Activated CD4-positive, alpha-beta memory T cell treated with anti-CD3 and anti-CD28 coated beads, Interleukin-2, amount 10 ng/mL, durations not matched to agents 7 days and 5 days (primary cell): ENCODE measurements at regions of chr22 and their contacts with region 1.

Region 1: GRCh38 chr22:40898850-40899357 is 37.0 kb upstream of the DNAJB7 start:
- DNase-seq: no peak
- H3K4me3 Mint-ChIP-seq: no peak overlapping the region
- H3K27ac Mint-ChIP-seq: peak overlapping the region; percentile 52
- H3K4me1 Mint-ChIP-seq: peaks cover 21% of the 10 kb centered on the region
- H3K27me3 Mint-ChIP-seq: no peaks in the 10 kb centered on the region

Region 2: DNA sequence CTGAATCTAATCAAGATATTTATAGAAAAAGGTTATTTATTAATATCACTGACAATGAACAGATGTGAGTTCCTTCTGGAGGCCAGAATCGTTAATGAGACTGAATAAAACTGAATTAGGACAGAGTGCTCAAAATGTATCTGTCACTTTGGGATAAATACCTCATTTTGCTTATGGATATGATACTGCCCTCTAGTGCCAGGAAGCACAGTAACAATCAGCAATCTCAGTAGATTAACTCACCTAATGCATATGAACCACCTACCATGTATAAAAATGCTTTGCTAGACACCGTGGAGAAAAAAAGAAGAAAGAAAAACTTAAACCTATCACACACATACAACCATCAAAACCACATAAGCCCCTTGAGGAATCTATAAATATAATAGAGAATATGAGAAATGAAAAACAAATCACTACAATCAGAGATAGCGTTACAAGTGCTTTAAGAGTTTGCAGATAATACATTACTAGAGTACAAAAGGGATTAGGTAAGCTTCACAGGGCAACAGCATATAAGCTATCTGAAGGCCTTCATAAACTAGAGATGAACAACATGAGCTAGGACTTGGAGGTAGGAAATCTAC is 411.1 kb before region 1 on chr22:
- CTCF ChIA-PET with region 1: interaction called, 13 read pairs
- POLR2A ChIA-PET with region 1: no interaction called
- DNase-seq: no peak
- H3K4me3 Mint-ChIP-seq: no peak overlapping the region
- H3K27ac Mint-ChIP-seq: no peak overlapping the region
- H3K4me1 Mint-ChIP-seq: peaks cover 21% of the 10 kb centered on the region
- H3K27me3 Mint-ChIP-seq: no peaks in the 10 kb centered on the region

Region 3: DNA sequence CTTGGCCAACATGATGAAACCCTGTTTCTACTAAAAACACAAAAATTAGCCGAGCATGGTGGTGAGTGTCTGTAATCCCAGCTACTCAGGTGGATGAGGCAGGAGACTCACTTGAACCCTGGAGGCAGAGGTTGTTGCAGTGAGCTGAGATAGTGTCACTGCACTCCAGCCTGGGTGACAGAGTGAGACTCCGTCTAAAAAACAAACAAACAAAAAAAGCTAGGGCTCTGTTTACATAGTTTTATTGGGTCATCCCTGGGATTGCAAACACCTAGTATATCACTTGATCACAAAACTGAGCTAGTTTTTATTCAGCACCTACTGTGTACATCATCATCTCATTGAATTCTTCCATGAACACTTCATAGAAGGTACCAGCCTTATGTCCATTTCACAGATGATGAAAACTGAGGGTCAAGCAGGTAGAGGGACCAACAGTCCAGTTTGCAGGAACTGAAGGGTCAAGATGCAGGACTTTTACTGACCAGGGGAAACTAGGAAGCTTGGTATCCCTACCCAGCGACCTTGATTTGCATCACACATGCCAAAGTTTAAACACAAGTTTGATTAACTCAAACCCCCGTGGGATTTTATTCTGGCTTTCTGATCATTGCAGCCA is 253.2 kb before region 1 on chr22:
- CTCF ChIA-PET with region 1: interaction called, 22 read pairs
- POLR2A ChIA-PET with region 1: no interaction called
- DNase-seq: no peak
- H3K4me3 Mint-ChIP-seq: no peak overlapping the region
- H3K27ac Mint-ChIP-seq: no peak overlapping the region
- H3K4me1 Mint-ChIP-seq: peaks cover 21% of the 10 kb centered on the region
- H3K27me3 Mint-ChIP-seq: peaks cover 3% of the 10 kb centered on the region

Region 4: DNA sequence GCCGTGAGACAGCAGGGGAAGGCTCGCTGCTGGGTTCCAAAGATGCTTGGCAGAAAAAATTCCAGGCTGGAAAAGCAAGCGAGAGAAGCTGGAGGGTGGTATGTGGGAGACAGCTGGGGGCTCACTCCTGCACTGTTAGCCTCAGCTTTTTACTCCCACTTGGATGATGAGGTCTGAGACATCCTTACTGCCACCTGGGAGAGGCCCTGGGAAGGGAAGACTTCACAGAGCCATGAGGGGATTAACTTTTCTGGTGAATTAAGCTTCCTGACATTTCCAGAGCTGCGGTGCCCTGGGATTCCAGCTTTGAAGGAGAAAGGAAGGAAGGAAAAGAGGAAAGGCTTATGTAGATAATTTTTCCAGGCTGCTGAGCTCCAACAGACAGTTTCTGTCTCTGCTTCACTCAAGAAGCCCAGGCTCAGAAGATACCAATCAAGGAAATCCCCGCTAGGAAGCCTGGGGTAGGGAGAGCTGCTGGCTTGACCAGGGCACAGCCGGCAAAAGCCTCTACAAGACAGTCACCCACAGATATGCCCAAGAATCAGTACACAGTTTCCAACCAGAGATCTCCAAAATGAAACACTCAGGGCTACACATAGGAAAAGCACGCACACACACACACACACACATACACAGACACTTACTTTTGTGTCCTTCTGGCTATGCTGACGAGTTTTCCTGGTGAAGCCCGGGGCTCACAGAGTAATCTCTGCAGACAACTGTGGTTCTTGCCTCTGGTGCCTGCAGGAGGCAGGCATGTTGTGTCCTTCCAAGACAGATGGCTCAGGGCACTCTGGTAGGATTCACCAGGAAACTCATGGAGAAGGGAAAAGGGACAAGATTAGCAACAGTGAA is 218.7 kb before region 1 on chr22:
- CTCF ChIA-PET with region 1: interaction called, 54 read pairs
- POLR2A ChIA-PET with region 1: interaction called, 8 read pairs
- DNase-seq: no peak
- H3K4me3 Mint-ChIP-seq: no peak overlapping the region
- H3K27ac Mint-ChIP-seq: no peak overlapping the region
- H3K4me1 Mint-ChIP-seq: peaks cover 30% of the 10 kb centered on the region
- H3K27me3 Mint-ChIP-seq: peaks cover 17% of the 10 kb centered on the region

Region 5: DNA sequence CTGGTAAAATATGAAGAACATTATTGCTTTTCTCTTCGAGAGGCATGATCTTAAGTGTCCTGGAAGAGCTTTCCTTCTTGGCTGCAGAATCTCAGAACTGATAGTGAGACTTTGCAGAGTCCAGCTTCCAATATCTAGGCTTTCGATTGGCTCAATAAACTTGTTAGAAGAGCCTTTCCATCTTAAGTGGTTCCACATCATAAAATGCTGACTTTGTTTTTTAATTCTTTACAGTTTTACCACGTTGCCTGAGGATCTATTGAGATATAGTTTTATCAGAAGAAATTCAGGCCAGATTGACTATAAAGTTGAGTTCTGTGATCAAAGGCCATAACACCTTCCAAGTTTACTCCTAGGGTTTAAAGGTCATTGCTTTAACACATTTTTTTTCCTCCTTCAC is 21.4 kb before region 1 on chr22:
- CTCF ChIA-PET with region 1: interaction called, 10 read pairs
- POLR2A ChIA-PET with region 1: no interaction called
- DNase-seq: no peak
- H3K4me3 Mint-ChIP-seq: no peak overlapping the region
- H3K27ac Mint-ChIP-seq: no peak overlapping the region
- H3K4me1 Mint-ChIP-seq: no peaks in the 10 kb centered on the region
- H3K27me3 Mint-ChIP-seq: no peaks in the 10 kb centered on the region

Region 6: DNA sequence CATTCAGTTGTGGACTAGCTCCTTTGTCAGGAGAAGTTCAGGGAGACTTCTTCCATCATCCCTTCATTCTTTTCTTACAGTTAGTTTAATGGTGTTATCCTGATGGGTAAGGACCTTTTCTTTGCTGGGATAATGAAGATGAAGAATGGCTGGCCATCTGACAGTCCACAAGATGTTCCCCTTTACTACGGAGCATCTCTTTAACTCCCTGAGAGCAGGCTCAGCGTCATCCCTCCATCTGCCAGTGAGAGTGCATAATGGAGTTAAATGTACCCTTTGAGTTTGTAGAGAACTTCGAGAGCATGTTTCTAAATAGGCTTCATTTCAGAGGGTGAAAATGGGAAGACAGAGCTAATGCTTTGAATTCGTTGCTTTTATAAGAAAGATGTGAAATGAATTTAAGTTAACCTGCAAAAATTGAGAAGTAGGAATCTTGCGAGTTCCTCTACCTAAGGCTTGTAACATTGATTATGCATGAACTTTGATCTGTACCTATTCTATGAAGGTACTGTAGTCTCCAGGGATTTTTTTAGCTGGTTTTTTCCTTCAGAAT is 195.2 kb after region 1 on chr22:
- CTCF ChIA-PET with region 1: no interaction called
- POLR2A ChIA-PET with region 1: no interaction called
- DNase-seq: peak; percentile 28
- H3K4me3 Mint-ChIP-seq: peak overlapping the region; percentile 93
- H3K27ac Mint-ChIP-seq: peak overlapping the region; percentile 94
- H3K4me1 Mint-ChIP-seq: peaks cover 45% of the 10 kb centered on the region
- H3K27me3 Mint-ChIP-seq: no peaks in the 10 kb centered on the region